SK-N-SH (cell line): ENCODE measurements at regions of chr20 and their contacts with region 1.

Region 1: DNA sequence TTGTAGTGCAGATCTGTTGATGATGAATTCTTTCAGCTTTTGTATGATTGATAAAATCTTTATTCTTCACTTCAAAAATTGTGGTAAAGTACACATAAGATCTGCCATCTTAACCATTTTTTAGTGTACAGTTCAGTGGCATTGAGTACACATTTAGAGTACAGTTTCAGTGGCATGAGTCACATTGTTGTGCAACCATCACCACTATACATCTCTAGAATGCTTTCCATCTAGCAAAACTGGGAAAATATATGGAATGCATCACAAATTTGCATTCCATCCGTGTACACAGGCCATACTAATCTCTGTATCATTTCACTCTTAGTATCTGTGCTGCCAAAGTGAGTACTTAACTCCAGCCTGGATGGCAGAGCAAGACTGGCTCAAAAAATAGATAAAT is 28.7 kb downstream of the SIRPD start:
- DNase-seq: no peak
- H3K4me3 ChIP-seq: no peak overlapping the region
- H3K27ac ChIP-seq: no peak overlapping the region
- H3K4me1 ChIP-seq: no peaks in the 10 kb centered on the region
- H3K27me3 ChIP-seq: no peaks in the 10 kb centered on the region
- CTCF ChIP-seq: no peak
- EP300 ChIP-seq: no peak
- RAD21 ChIP-seq: no peak

Region 2: GRCh38 chr20:1509237-1509636 is 19.6 kb before region 1 on chr20:
- CTCF ChIA-PET with region 1: interaction called, 11 read pairs
- POLR2A ChIA-PET with region 1: no interaction called
- DNase-seq: peak; percentile 8
- H3K4me3 ChIP-seq: no peak overlapping the region
- H3K27ac ChIP-seq: no peak overlapping the region
- H3K4me1 ChIP-seq: no peaks in the 10 kb centered on the region
- H3K27me3 ChIP-seq: peaks cover 10% of the 10 kb centered on the region; the same call in 1 of the 2 replicates
- CTCF ChIP-seq: peak; percentile 58
- EP300 ChIP-seq: no peak
- RAD21 ChIP-seq: peak; percentile 58

Region 3: DNA sequence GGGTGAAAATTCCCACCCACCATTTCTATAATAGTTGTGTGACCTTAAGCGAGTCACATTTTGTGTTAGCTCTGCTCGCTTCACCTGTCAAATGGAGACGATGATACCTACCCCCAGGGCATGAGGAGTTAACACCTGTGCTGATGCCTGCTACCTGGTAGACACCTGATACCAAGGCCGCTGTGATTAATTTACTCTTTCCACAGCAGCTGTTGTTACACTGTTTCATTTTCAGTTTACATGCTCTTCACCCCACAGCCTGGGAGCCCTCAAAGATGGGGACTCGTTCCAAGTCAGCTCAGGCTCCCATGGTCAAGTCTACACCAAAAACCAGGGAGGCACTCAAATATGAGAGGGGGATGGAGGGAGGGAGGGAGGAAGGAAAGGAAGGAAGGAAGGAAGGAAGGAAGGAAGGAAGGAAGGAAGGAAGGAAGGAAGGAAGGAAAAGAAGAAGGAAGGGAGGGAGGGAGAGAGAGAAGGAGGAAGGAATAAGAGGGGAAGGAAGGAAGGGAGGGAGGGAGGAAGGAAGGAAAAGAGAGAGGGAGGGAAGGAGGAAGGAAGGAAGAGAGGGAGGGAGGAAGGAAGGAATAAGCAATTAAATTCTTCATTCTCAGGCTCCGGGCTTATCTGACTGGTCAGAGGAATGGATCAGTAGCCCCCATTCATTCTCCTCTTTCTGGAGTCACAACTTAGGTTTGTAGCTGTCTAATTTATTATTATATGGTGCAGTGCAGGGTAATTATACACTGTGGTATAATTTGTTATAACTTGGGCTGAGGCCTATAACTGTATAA is 424.1 kb after region 1 on chr20:
- CTCF ChIA-PET with region 1: no interaction called
- POLR2A ChIA-PET with region 1: no interaction called
- DNase-seq: no peak
- H3K4me3 ChIP-seq: no peak overlapping the region
- H3K27ac ChIP-seq: no peak overlapping the region
- H3K4me1 ChIP-seq: peaks cover 9 to 12% of the 10 kb centered on the region in 2 experiments; a peak in 2 of 4 replicates
- H3K27me3 ChIP-seq: no peaks in the 10 kb centered on the region
- CTCF ChIP-seq: no peak
- EP300 ChIP-seq: no peak
- RAD21 ChIP-seq: no peak